Right cardiac atrium (tissue), 5 donors: ENCODE measurements at regions of chr11 and their contacts with region 1.

Region 1: GRCh38 chr11:119205574-119206510 is at the start of gene CBL:
- DNase-seq: peak; percentile 95 to 98 (median 97)
- ATAC-seq: peak; percentile 96
- H3K4me3 ChIP-seq: peak within 1 kb of the TSS; percentile 77
- H3K27ac ChIP-seq: peak within 1 kb of the TSS; percentile 69
- H3K4me1 ChIP-seq: no peaks in the 10 kb centered on the region
- H3K27me3 ChIP-seq: no peaks in the 10 kb centered on the region
- total RNA-seq, gene CBL: 8.5 to 13.3 (median 10.3) TPM

Region 2: GRCh38 chr11:118956094-118956846 is 249.6 kb before region 1 on chr11 and contains the start of gene UPK2:
- intact Hi-C with region 1: no loop called
- DNase-seq: peak; percentile 88 to 96 (median 95)
- ATAC-seq: peak; percentile 95 to 96
- H3K4me3 ChIP-seq: no peak within 1 kb of the TSS
- H3K27ac ChIP-seq: no peak within 1 kb of the TSS
- H3K4me1 ChIP-seq: no peaks in the 10 kb centered on the region
- H3K27me3 ChIP-seq: no peaks in the 10 kb centered on the region
- total RNA-seq, gene UPK2: not detected

Region 3: DNA sequence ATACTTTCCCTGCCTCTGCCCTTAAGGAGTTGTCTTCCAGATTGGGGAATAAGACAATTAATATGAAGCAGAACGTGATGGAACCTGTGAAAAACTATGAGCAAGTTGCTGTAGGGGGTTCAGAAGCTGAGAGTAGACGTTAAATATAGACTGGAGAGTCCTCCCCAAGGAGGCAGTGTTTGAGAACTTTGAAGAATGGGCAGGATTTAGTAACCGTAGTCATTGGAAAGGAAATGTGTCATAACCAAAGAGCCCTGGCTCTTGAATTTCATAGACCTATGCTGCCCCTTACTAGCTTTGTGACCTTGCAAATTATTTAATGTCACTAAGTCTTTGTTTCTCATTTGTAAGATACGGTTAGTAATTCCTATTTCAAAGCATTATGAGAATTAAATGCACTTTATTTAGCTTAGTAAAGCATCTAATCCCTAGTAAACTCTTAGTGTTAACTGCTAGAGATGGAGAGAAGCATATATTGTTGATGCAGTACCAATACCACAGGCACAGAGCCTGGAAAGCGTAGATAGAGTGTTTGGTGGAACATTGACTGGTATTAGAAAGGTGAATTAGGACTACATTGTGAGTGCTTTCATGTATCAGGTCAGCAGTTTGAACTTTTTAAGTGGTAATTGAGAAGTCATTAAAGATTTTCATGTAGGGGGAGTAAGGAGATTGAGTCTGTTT is 57.0 kb after region 1 on chr11:
- intact Hi-C with region 1: loop called in 1 of 4 experiments (anchors 10 kb)
- DNase-seq: no peak
- ATAC-seq: peak in 1 of 2 donors; percentile 70
- H3K4me3 ChIP-seq: no peak overlapping the region
- H3K27ac ChIP-seq: no peak overlapping the region
- H3K4me1 ChIP-seq: no peaks in the 10 kb centered on the region
- H3K27me3 ChIP-seq: no peaks in the 10 kb centered on the region

Region 4: GRCh38 chr11:119284344-119285157 is 78.7 kb after region 1 on chr11:
- intact Hi-C with region 1: loop called in 1 of 4 experiments (anchors 10 kb)
- DNase-seq: no peak
- ATAC-seq: peak; percentile 71 to 75
- H3K4me3 ChIP-seq: no peak overlapping the region
- H3K27ac ChIP-seq: no peak overlapping the region
- H3K4me1 ChIP-seq: no peaks in the 10 kb centered on the region
- H3K27me3 ChIP-seq: no peaks in the 10 kb centered on the region

Region 5: DNA sequence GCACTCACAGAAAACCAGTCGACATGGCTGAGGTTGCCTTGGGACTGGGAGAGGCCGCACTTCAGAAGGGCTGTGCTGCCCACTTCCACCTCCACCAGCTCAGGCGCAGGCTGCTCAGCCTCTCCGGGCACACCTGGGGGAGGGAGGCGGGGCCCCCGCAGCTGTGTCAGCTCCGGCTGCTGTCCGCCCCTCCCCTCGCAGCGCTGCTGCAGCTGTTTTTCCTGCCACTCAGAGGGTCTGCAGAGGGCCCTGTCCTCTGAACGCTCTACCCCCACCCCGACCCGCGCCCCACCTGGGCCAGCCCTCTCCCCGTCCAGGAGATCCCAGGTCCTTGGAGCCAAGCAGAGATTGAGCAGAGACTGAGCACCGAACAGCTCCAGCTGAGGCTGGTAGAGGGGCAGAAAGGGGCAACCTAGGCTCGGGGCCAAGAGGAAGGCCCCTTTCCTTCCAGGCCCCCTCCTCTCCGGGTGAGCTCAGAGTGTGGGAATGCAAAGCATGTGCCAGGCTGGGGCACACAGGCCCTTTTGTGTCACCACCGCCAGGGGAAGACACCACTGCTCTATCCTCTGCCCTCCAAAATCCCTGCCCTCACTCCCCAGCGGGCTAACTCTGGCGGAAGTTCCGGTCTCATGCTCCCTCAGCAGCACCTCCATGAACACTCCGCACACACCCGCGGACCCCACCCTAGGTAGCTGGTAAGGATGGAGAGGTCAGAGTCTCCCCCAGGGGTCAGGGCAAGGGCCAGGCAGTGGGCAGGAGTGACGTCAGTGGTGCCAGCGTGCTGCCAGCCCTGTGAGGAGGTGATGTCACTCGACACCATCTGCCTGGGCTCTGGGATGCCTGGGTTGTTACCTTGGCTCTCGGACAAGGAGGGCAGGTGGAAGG is 109.5 kb after region 1 on chr11:
- intact Hi-C with region 1: loop called in 2 of 4 experiments (anchors 10 kb)
- DNase-seq: peak; percentile 49 to 79 (median 72)
- ATAC-seq: peak; percentile 6 to 47
- H3K4me3 ChIP-seq: peak overlapping the region; percentile 80
- H3K27ac ChIP-seq: peak overlapping the region; percentile 81
- H3K4me1 ChIP-seq: peaks cover 13% of the 10 kb centered on the region
- H3K27me3 ChIP-seq: no peaks in the 10 kb centered on the region

Region 6: DNA sequence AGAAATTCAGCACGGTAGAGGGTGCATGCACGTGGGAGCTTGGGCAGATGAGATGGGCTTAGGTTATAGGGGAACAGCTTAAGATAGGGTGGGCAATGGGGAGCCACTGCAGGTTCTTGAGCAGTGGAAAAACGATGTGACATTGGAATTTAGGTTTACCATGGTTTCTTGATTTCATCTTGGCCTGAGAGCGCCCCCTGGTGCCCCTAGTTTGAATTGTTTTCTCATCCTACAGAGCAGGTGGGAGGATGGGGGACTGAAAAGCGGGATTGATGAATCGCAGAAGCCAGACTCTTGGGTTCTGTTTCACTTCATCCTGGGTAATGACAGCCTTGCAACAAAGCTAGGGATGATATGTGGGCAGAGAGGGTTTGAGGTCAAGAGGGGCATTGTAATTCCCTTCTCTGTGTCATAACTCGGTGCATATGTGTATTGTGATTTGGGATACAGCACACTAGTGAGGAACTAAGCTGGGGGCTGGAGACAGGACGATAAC is 117.7 kb after region 1 on chr11:
- intact Hi-C with region 1: loop called in 2 of 4 experiments (anchors 10 kb)
- DNase-seq: peak; percentile 72 to 87 (median 76)
- ATAC-seq: no peak
- H3K4me3 ChIP-seq: no peak overlapping the region
- H3K27ac ChIP-seq: no peak overlapping the region
- H3K4me1 ChIP-seq: peaks cover 10% of the 10 kb centered on the region
- H3K27me3 ChIP-seq: no peaks in the 10 kb centered on the region